ENCODE measurements at regions of chr5 and their contacts with region 1.

Region 1: GRCh38 chr5:5421961-5422818 is at the start of gene ICE1:
- DNase-seq: peak; percentile 98
- H3K4me3 Mint-ChIP-seq: no peak within 1 kb of the TSS
- H3K27ac Mint-ChIP-seq: no peak within 1 kb of the TSS
- H3K4me1 Mint-ChIP-seq: peaks cover 11% of the 10 kb centered on the region
- H3K27me3 Mint-ChIP-seq: no peaks in the 10 kb centered on the region
- CTCF ChIP-seq: no peak
- total RNA-seq, gene ICE1: 25.7 and 28.4 TPM in 2 replicates

Region 2: DNA sequence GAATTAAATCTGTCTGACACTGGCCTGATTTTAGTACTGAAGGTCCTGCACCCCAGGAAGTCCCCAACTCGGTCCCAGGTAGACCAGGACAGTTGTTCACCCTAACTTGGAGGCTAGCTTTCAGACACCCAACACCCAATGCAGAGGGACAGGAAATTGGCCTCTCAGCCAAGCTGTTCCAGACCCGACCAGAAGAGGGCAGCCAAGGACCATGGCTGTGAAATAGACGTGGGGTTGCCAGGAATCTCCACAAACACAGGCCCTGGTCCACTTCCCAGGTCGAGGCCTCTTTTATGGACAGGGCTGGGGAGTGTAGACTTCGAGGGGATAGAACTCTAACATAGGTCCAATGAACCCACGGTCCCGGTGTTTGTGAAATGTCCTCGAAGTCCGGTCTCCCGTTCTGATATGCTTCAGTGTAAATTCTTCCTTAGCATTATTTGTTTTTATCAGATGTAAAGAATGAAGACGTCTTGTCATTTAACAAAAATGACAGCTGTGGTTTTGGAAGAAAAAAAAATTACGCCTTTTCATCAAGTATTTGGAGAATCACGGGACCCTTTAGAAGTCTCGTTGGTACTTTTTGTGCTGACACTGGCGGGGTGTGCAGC is 542.4 kb before region 1 on chr5:
- CTCF ChIA-PET with region 1: interaction called, 139 read pairs
- POLR2A ChIA-PET with region 1: interaction called, 6 read pairs
- intact Hi-C with region 1: loop called (anchors 1 kb)
- DNase-seq: peak; percentile 78
- H3K4me3 Mint-ChIP-seq: no peak overlapping the region
- H3K27ac Mint-ChIP-seq: no peak overlapping the region
- H3K4me1 Mint-ChIP-seq: no peaks in the 10 kb centered on the region
- H3K27me3 Mint-ChIP-seq: peaks cover 9% of the 10 kb centered on the region
- CTCF ChIP-seq: peak; percentile 93

Region 3: GRCh38 chr5:5141625-5142532 is 280.3 kb before region 1 on chr5:
- CTCF ChIA-PET with region 1: interaction called, 96 read pairs
- POLR2A ChIA-PET with region 1: interaction called, 9 read pairs
- intact Hi-C with region 1: loop called (anchors 1 kb)
- DNase-seq: peak; percentile 74
- H3K4me3 Mint-ChIP-seq: no peak overlapping the region
- H3K27ac Mint-ChIP-seq: no peak overlapping the region
- H3K4me1 Mint-ChIP-seq: no peaks in the 10 kb centered on the region
- H3K27me3 Mint-ChIP-seq: peaks cover 16% of the 10 kb centered on the region
- CTCF ChIP-seq: peak; percentile 78

Region 4: DNA sequence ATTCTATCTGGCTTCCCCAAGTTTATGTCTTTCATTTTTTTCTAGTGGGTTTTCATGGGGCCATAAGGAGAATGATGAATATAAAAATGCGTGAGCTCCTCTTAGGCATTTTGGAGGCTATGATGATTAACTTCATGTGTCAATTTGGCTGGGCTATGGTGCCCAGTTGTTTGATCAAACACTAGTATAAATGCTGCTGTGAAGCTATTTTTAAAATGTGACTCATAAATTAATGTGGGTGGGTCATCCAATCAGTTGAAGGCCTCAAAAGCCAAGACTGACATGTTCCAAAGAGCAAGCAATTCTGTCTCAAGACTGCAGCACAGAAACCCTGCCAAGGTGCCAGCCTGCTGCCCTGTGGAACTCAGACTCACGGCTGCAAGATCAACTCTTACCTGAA is 24.1 kb before region 1 on chr5:
- CTCF ChIA-PET with region 1: interaction called, 29 read pairs
- POLR2A ChIA-PET with region 1: interaction called, 10 read pairs
- intact Hi-C with region 1: loop called (anchors 1 kb)
- DNase-seq: peak; percentile 23
- H3K4me3 Mint-ChIP-seq: no peak overlapping the region
- H3K27ac Mint-ChIP-seq: no peak overlapping the region
- H3K4me1 Mint-ChIP-seq: peaks cover 7% of the 10 kb centered on the region
- H3K27me3 Mint-ChIP-seq: no peaks in the 10 kb centered on the region
- CTCF ChIP-seq: no peak